ENCODE measurements at regions of chr2 and their contacts with region 1.

Region 1: DNA sequence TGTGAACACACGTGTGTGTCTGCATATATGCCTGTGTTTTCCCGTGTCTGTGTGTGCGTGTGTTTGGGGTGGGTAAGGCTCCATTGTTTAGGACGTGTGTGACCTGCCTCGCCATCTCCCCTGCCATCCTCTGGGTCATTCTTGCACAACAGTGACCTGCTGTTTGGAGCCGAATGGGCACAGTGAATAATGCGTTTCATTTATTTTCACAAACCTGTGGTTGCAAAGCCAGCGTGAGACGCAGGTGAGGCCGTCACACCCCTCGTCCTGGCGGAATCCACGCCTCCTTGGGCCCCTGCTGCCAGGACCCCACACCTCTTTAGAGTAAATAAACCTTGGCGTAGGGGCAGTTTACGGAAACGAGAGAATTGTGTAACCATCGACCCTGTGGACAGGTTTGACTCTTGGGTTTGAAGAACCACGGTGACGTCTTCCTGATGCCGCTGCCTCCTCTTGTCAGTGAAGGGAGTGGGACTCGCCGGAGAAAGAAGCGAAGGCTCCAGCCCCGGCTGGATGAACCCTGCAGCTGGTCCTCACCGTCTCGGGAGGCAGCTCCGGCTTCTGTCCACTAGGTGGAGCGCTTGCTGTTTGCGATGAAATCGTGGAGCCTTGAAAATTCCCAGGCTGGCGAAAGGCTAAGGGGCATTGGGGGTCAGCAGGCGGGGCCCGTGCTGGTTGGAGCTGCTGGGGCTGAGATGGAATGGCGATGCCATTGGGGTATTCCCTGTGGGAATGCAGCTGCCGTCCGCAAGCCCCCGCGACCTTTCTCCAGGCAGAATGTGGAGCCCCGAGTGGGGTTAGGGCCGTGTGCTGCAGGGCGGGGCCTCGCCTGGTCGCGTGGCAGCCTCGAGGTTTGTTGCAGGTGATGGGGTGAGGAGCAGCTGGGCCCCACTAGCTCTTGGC is 81.1 kb downstream of the RTP5 start:
- DNase-seq: peak; percentile 89
- CTCF ChIP-seq: peak; percentile 97

Region 2: GRCh38 chr2:241833101-241833663 is 117.5 kb before region 1 on chr2:
- CTCF ChIA-PET with region 1: no interaction called
- POLR2A ChIA-PET with region 1: no interaction called
- DNase-seq: no peak
- CTCF ChIP-seq: no peak

Region 3: GRCh38 chr2:241940329-241940728 is 10.3 kb before region 1 on chr2:
- CTCF ChIA-PET with region 1: interaction called, 12 read pairs
- POLR2A ChIA-PET with region 1: no interaction called
- DNase-seq: no peak
- CTCF ChIP-seq: no peak

Region 4: GRCh38 chr2:241965931-241966412 is 15.3 kb after region 1 on chr2:
- CTCF ChIA-PET with region 1: interaction called, 19 read pairs
- POLR2A ChIA-PET with region 1: no interaction called
- DNase-seq: peak; percentile 77
- CTCF ChIP-seq: no peak

Region 5: DNA sequence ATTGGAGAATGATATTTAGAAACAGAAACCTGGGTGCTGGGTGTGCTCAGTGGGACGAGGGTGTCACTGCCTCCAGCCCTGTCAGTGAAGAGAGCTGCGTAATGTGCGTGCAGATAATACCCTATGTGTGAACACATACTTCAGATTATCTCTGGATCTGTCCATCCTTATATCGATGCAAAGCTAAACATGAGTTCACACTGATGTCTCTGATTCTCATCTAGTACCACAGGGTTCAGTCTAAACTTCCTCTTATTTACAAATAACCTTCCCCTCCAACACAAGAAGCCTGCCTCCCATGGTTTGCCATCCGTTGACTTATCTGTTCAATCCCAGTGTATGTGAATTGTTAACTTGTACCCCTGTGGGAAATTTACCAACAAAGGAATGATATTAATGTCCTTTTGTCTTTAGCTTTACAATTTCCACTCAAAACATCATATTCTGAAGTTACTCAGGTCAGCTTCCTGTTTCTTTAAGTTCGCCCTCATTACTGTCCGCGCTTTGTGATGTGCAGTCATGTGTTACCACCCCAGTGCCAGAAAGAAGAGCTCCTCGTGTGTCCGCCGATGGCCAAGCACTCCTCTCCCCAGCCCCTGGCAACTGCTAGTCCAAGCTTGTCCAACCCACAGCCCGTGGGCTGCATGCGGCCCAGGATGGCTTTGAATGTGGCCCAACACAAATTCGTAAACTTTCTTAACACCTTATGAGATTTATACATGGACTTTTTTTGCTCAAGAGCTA is 27.1 kb after region 1 on chr2:
- CTCF ChIA-PET with region 1: interaction called, 10 read pairs
- POLR2A ChIA-PET with region 1: no interaction called
- DNase-seq: no peak
- CTCF ChIP-seq: no peak

Measured in GM10248 (cell line).